Sciatic nerve (tissue), 2 donors: ENCODE measurements at regions of chr1 and their contacts with region 1.

Region 1: DNA sequence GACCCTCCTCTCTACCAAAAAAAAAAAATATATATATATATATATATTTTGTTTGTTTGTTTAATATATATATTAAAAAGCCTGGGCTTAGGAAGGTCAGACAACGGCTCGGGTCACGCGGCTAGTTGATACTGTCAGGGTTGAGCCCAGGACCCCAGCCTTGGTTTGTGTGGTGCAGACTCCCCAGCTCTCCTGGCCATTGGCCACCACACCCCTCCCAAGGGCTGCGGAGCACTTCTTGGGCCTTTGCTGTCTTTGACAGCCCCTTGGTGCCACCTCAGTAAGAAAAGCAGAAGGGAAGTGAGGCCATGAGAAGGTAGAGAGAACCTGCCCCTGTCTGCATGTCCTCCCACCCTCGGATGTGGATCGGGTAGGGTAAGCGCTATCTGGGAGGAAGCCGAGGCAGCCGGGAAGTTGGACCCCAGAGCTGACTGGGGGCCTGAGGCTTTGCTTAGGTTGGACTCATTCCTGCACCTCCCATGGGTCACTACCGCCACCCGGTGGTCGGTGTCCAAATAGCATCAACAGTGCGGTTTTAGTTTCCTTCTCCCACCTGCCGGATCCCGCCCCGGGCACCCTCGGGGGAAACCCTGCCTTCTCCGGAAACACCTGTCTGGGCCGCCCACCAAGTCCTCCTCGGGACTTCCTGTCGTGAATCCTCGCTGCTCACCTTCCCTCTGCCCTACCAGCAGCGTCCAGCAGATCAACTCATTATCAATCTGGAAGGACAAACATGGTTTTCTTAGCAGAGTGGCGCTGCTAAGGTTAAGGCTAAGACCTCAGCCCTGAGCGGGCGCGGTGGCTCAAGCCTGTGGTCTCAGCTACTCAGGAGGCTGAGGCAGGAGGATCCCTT is 29.8 kb upstream of the GNPAT start:
- DNase-seq: peak; percentile 87
- ATAC-seq: peak; percentile 76

Region 2: DNA sequence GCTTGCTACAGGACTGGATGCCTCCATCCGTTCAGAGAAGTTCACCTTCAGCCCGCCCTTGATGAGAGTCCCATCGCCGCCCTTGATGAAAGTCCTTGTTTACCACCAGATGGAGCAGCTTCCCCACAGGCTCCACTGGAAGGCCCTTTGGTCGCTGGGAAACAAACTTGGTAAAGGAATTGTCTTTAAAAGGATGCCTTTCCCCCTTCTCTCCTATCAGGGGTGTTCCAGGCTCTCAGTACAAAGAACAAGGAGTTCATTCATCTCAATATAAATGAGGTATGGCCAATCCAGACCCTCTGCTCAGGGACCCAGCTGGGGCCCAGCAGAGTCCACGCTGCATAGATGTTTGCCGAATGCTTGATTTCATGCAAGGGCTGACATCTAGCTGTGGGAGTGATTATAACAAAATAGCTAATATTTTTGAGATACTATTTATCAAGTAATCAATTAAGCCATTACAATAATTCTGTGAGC is 413.3 kb before region 1 on chr1:
- intact Hi-C with region 1: loop called (anchors 10 kb)
- DNase-seq: peak; percentile 81
- ATAC-seq: peak; percentile 94